Tibial artery (tissue), 4 donors: ENCODE measurements at regions of chr12 and their contacts with region 1.

Region 1: DNA sequence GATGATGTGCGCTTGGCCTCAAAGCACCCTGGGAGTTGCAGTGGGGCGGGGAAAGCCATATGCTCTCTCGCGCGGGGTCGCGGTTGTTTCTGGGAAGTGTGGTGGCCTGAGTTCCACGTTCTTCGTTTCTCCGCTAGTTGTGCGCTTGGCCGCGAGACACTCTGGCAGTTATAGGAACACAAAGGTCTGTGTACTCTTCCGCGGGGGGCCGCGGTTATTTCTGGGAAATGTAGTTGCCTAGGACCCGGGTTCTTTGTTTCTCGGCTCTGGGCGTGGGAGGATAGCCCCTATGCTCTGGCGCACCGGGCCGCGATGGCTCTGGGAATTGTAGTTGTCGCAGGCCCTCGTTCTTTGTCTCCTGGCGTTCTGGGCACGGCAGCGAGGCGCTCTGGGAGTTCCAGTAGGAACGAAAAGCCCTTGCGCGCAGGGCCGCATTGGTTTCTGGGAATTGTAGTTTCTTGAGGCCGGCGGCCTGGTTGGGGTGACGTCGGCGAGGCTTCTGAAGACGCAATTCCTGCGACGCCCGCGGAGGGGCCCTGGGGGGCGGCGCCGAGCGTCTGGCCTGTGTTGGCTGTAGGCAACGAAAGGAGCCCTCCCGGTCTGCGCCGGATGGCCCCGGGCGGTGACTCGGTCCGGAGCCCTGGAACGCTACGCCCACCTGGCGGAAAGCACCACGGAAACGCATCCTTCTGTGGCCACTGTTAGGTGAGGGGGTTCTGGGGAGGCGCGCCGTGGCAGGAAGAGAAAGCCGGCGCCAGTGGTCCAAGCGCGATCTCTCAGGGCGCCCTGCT is at the start of gene ZNF140:
- DNase-seq: peak; percentile 95 to 98
- H3K4me3 ChIP-seq: peak within 1 kb of the TSS; percentile 87 to 89
- H3K27ac ChIP-seq: peak within 1 kb of the TSS; percentile 96 to 99
- H3K4me1 ChIP-seq: peaks cover 0 to 17% (median 8%) of the 10 kb centered on the region in 4 donors
- H3K27me3 ChIP-seq: no peaks in the 10 kb centered on the region
- CTCF ChIP-seq: peak; percentile 30 to 47

Region 2: DNA sequence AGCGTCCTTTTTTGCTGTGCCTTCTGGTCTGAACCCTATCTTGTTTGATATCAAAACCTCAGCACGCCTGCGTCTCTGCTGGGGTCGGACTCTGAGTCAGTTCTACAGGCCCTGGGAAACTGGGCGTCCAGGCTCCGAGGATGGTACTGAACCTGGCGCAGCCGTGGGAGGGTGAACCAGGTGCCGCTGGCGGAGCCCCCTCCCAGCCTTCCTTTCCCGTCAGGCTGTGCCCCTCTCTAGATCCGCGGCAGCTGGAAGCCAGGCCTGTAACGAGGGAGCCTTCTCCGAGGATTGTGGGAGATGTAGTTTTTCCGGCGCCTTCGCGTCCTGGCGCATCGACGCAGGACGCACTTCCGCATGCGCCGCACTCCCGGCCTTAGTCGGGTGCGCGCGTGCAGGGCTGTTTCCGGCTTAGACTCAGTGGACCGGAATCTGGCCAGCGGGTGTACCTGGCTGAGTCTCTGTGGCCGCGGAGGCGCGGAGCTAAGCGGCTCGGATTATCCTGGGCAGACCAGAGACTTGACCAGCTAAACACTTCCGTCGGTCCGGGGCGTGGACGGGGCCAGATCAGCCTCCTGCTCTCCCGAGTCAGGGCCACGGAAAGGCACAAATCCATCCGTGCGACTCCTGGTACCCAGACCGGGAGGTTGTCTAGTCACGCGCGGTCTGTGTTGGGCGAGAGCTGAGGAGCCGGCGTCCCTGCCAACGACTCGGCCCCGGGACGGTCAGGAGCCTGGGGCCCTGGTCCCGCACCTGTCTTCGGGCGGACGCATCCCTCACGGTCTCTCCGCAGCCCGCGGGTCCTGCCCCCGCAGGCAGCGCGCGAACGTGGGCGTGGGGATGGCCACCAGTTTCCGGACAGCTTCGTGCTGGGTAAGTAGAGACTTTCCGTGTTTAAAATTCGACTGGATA is 94.3 kb before region 1 on chr12 and contains the start of gene ZNF26:
- intact Hi-C with region 1: loop called (anchors 5 kb)
- DNase-seq: peak; percentile 87 to 93
- H3K4me3 ChIP-seq: peak within 1 kb of the TSS; percentile 82 to 96
- H3K27ac ChIP-seq: peak within 1 kb of the TSS; percentile 80 to 84
- H3K4me1 ChIP-seq: peaks cover 0 to 21% (median 10%) of the 10 kb centered on the region in 4 donors
- H3K27me3 ChIP-seq: no peaks in the 10 kb centered on the region
- CTCF ChIP-seq: no peak

Region 3: GRCh38 chr12:133037207-133038005 is 43.2 kb before region 1 on chr12 and contains the start of gene ZNF84:
- intact Hi-C with region 1: loop called (anchors 5 kb)
- DNase-seq: peak; percentile 95 to 98
- H3K4me3 ChIP-seq: peak within 1 kb of the TSS; percentile 80 to 93
- H3K27ac ChIP-seq: peak within 1 kb of the TSS; percentile 95 to 96
- H3K4me1 ChIP-seq: peaks cover 0 to 9% (median 6%) of the 10 kb centered on the region in 4 donors
- H3K27me3 ChIP-seq: no peaks in the 10 kb centered on the region
- CTCF ChIP-seq: no peak

Region 4: GRCh38 chr12:133129368-133130037 is 48.9 kb after region 1 on chr12:
- intact Hi-C with region 1: loop called (anchors 2 kb)
- DNase-seq: no peak
- H3K4me3 ChIP-seq: peak overlapping the region; percentile 68 to 86
- H3K27ac ChIP-seq: peak overlapping the region; percentile 93 to 97
- H3K4me1 ChIP-seq: peaks cover 0 to 10% (median 2%) of the 10 kb centered on the region in 4 donors
- H3K27me3 ChIP-seq: no peaks in the 10 kb centered on the region
- CTCF ChIP-seq: no peak